ENCODE measurements at regions of chr2 and their contacts with region 1.

Region 1: GRCh38 chr2:191013932-191014652 is at the start of gene STAT1:
- DNase-seq: peak; percentile 83 to 88
- ATAC-seq: peak; percentile 92 to 96
- H3K4me3 ChIP-seq: peak within 1 kb of the TSS; percentile 82 to 98 (median 90)
- H3K27ac ChIP-seq: peak within 1 kb of the TSS; percentile 89 to 98 (median 95)
- H3K4me1 ChIP-seq: peaks cover 13 to 25% of the 10 kb centered on the region in 2 donors
- H3K27me3 ChIP-seq: no peaks in the 10 kb centered on the region
- CTCF ChIP-seq: peak in 4 of 5 experiments; percentile 18 to 28 (median 20)
- POLR2A ChIP-seq: peak; percentile 89 to 90
- total RNA-seq, gene STAT1: 23.0 to 36.9 (median 28.6) TPM

Region 2: DNA sequence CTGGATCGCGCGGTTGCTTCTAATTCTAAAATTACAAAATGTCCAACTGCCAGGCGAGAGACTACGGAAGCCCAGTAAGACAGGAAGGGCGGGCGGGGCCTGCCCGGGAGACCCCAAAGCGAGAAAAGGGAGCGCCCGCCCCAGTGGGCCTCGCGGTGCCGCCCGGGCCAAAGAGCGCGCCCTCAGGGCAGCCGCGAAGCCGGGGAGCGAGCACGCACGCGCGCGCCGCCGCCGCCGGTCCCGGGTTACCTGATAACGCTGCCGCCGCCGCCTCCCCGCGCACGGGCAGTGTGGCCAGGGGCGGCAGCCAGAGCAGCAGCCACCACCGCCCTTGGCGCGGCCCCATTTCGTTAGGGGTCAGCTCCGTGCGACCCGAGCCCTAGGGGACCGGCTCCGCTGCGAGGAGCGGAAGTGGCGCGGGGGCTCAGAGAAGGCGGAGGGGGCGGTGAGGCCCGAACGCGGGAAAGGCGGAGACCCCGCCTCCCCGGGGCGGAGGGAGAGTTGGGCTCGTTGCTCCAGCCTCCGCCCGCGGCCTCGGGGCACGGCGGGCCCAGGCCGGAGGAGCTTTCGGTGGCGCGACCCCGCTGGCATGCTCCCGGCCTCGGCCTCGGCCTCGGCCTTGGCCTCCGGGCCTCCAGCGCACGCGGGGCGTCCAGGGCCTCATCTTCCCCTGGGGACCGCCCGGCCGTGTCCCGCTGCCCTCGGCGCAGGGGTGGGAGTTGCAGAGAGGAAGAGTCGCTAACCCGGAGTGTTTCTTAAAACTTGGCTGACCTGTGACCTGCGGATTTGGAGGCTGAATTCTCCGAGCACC is 479.6 kb before region 1 on chr2 and contains the start of gene NEMP2:
- in situ Hi-C with region 1: no loop called
- intact Hi-C with region 1: loop called (anchors 10 kb)
- DNase-seq: peak; percentile 55 to 74
- ATAC-seq: peak; percentile 91
- H3K4me3 ChIP-seq: peak within 1 kb of the TSS; percentile 59 to 81 (median 68)
- H3K27ac ChIP-seq: peak within 1 kb of the TSS; percentile 85 to 95 (median 87)
- H3K4me1 ChIP-seq: peaks cover 11 to 13% of the 10 kb centered on the region in 2 donors
- H3K27me3 ChIP-seq: no peaks in the 10 kb centered on the region
- CTCF ChIP-seq: no peak
- POLR2A ChIP-seq: peak; percentile 57 to 74
- total RNA-seq, gene NEMP2: 0.24 to 1.7 (median 1.3) TPM

Region 3: GRCh38 chr2:190648289-190649034 is 365.6 kb before region 1 on chr2:
- in situ Hi-C with region 1: no loop called
- intact Hi-C with region 1: loop called (anchors 10 kb)
- DNase-seq: peak; percentile 70 to 76
- ATAC-seq: peak; percentile 78 to 80
- H3K4me3 ChIP-seq: peak overlapping the region; percentile 69 to 87 (median 82)
- H3K27ac ChIP-seq: peak overlapping the region; percentile 73 to 87 (median 82)
- H3K4me1 ChIP-seq: peaks cover 20 to 28% of the 10 kb centered on the region in 2 donors
- H3K27me3 ChIP-seq: no peaks in the 10 kb centered on the region
- CTCF ChIP-seq: no peak
- POLR2A ChIP-seq: peak; percentile 58 to 66

Measured in gastrocnemius medialis (tissue), 4 donors.